ENCODE measurements at regions of chr5 and their contacts with region 1.

Region 1: GRCh38 chr5:87780831-87781760 is 368.4 kb upstream of the CCNH start:
- DNase-seq: peak; percentile 87
- H3K4me3 ChIP-seq: no peak overlapping the region
- H3K27ac ChIP-seq: no peak overlapping the region
- H3K4me1 ChIP-seq: peaks cover 0 to 6% (median 3%) of the 10 kb centered on the region in 6 donors
- H3K27me3 ChIP-seq: peaks cover 0 to 42% (median 6%) of the 10 kb centered on the region in 7 donors
- CTCF ChIP-seq: peak; percentile 46 to 85 (median 80)
- POLR2A ChIP-seq: no peak

Region 2: GRCh38 chr5:87551911-87552310 is 229.2 kb before region 1 on chr5:
- intact Hi-C with region 1: no loop called
- DNase-seq: no peak
- H3K4me3 ChIP-seq: no peak overlapping the region
- H3K27ac ChIP-seq: no peak overlapping the region
- H3K4me1 ChIP-seq: no peaks in the 10 kb centered on the region
- H3K27me3 ChIP-seq: no peaks in the 10 kb centered on the region
- CTCF ChIP-seq: no peak
- POLR2A ChIP-seq: no peak

Region 3: DNA sequence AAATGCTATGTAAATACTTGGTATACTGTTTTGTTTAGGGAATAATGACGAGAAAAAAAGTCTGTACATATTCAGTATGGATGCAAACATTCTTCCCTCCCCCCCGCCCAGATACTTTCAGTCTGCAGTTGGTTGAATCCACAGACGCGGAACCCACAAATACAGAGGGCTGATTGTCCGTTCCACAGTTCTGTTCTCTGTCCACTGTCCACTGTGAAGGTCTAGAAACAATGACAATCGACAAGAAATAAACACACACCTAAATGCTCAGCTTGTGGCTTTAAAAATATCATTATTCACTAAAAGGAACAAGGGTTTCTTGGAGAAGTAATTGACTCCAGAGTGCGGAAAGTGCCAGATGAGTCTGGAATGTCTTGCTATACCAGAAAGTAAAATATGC is 378.5 kb after region 1 on chr5:
- intact Hi-C with region 1: loop called (anchors 10 kb)
- DNase-seq: no peak
- H3K4me3 ChIP-seq: no peak overlapping the region
- H3K27ac ChIP-seq: no peak overlapping the region
- H3K4me1 ChIP-seq: no peaks in the 10 kb centered on the region
- H3K27me3 ChIP-seq: peaks cover 0 to 20% (median 0%) of the 10 kb centered on the region in 7 donors
- CTCF ChIP-seq: no peak
- POLR2A ChIP-seq: no peak

Region 4: GRCh38 chr5:88690409-88691229 is 909.5 kb after region 1 on chr5:
- intact Hi-C with region 1: loop called (anchors 2 kb)
- DNase-seq: peak; percentile 92
- H3K4me3 ChIP-seq: peak overlapping the region in 6 of 8 donors; percentile 5 to 54 (median 14)
- H3K27ac ChIP-seq: no peak overlapping the region
- H3K4me1 ChIP-seq: peaks cover 10 to 43% (median 38%) of the 10 kb centered on the region in 6 donors
- H3K27me3 ChIP-seq: peaks cover 24 to 100% (median 100%) of the 10 kb centered on the region in 7 donors
- CTCF ChIP-seq: peak; percentile 60 to 92 (median 87)
- POLR2A ChIP-seq: no peak

Measured in spleen (tissue), 13 donors.